Activated CD4-positive, alpha-beta memory T cell treated with anti-CD3 and anti-CD28 coated beads for 36 hours (primary cell): ENCODE measurements at regions of chr2 and their contacts with region 1.

Region 1: DNA sequence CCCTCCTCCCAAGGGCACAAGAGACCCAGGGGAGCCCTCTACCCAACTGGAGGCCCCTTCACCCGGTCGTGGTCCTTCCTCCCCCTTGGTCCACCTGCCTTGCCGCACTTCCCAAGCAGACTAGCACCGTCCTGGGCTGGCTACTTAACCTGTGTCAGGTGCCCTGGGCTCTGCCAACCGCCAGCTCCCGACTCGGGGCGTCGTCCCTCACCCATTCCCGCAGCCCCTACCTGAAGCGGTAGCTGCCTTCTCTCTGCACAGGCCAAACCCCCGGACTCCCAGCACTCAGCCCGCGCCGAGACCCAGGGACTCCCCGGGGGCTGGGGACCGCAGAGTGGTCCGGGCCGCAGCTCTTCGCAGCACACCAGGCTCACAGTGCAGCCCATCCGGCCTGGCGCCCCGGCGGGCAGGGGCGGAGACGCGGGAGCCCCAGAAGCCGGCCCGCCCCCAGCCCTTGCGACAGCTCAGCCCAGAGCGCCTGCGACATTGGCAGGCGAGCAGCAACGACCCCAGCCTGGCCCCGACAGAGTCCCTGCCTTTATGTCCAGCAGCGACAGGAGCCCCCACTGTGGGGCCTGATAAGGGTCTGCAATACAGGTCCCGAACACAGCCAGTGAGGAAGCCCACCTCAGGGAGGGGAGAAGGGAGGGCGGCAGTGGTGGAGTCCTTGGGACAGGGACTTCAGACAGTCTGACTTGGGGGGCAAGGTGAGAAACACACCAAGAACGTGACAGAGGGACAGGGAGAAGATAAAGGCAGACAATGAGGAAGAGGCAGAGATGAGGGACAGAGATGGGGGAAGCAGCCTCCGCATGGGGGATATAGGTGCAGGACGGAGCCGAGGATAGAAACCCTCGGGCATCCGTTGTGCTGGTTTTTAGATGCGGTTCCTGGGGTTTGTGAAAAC is 31.0 kb upstream of the TNS1 start:
- DNase-seq: no peak
- H3K4me3 Mint-ChIP-seq: no peak overlapping the region
- H3K27ac Mint-ChIP-seq: no peak overlapping the region
- H3K4me1 Mint-ChIP-seq: peaks cover 11% of the 10 kb centered on the region
- H3K27me3 Mint-ChIP-seq: no peaks in the 10 kb centered on the region

Region 2: GRCh38 chr2:217988014-217988839 is 45.6 kb before region 1 on chr2:
- CTCF ChIA-PET with region 1: no interaction called
- POLR2A ChIA-PET with region 1: no interaction called
- intact Hi-C with region 1: loop called (anchors 5 kb)
- DNase-seq: peak; percentile 78
- H3K4me3 Mint-ChIP-seq: no peak overlapping the region
- H3K27ac Mint-ChIP-seq: no peak overlapping the region
- H3K4me1 Mint-ChIP-seq: peaks cover 3% of the 10 kb centered on the region
- H3K27me3 Mint-ChIP-seq: peaks cover 5% of the 10 kb centered on the region

Region 3: GRCh38 chr2:218063486-218063885 is 29.6 kb after region 1 on chr2:
- CTCF ChIA-PET with region 1: interaction called, 18 read pairs
- POLR2A ChIA-PET with region 1: no interaction called
- intact Hi-C with region 1: loop called (anchors 2 kb)
- DNase-seq: no peak
- H3K4me3 Mint-ChIP-seq: no peak overlapping the region
- H3K27ac Mint-ChIP-seq: no peak overlapping the region
- H3K4me1 Mint-ChIP-seq: peaks cover under 1% of the 10 kb centered on the region
- H3K27me3 Mint-ChIP-seq: peaks cover 26% of the 10 kb centered on the region

Region 4: GRCh38 chr2:218069606-218070300 is 35.9 kb after region 1 on chr2:
- CTCF ChIA-PET with region 1: interaction called, 18 read pairs
- POLR2A ChIA-PET with region 1: no interaction called
- intact Hi-C with region 1: loop called (anchors 2 kb)
- DNase-seq: no peak
- H3K4me3 Mint-ChIP-seq: no peak overlapping the region
- H3K27ac Mint-ChIP-seq: no peak overlapping the region
- H3K4me1 Mint-ChIP-seq: peaks cover 8% of the 10 kb centered on the region
- H3K27me3 Mint-ChIP-seq: peaks cover 21% of the 10 kb centered on the region